ENCODE measurements at regions of chr4 and their contacts with region 1.

Region 1: GRCh38 chr4:2468445-2469192 is at the start of gene RNF4:
- DNase-seq: peak; percentile 92 to 98 (median 96)

Region 2: DNA sequence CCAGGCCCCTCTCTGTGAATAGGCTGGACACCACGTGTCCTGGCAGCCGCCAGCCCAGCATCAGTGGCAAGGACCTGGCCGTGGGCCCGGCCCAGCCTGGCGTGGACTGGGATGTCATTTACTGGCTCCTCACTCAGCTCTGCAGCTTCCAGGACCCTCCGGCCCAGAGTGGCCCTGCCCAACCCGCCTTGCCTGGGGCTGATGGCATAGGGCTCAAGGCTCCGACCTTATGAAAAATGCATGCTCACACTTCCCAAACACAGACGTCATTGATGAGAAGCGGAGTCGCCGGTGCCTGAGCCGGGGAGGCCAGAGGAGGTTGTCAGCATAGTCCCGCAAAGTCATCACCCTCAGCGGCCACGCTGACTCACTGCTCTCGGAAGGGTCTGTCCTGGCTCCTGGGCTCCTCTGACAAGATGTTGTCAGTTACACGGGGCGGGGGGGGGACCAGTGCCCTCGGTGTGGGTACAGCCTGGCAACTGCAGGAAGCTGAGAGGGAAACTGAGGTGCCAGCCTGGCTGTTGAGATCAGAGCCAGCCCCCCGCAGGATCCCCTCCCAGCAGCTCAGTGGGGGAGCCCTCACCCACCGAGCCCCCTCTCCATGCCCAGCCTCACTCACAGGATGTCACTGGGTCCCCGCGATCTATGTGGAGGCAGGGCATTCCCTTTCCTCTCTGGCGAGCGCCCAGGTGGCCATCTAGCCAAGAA is 35.5 kb before region 1 on chr4:
- intact Hi-C with region 1: loop called (anchors 5 kb)
- DNase-seq: peak; percentile 53 to 94 (median 84)

Region 3: DNA sequence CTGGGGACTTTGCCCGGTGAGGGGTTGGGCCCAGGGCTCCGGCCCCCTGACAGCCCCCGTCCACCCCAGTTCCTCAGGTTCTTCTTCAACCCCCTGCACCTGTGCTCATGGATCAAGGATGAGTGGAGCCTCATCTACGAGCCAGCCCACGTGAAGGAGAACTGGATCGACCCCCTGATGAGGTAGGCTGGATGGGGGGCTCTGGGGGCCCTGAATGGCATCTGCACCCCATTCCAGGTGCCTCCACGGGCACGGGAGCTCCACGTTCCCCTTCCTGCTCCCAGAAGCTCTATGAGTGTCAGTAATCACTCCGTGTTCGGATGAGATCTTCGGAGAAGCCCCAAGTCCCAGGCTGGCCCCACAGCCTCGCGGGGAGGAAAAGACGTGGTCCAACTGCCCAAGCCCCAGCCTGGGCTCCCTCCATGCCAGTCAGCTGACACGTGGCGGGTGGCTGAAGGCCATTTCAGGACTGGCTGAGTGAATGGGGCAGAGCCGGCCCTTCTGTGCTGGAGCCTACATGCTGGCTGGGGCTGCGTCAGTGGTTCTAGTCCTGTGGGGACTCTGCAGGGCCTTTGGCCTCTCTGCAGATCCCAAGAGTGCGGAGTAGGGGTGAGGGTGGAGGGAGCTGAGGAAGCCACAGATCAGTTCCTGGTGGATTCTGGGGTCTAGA is 25.4 kb before region 1 on chr4:
- intact Hi-C with region 1: no loop called
- DNase-seq: peak in 1 of 42 donors; percentile 20

Region 4: DNA sequence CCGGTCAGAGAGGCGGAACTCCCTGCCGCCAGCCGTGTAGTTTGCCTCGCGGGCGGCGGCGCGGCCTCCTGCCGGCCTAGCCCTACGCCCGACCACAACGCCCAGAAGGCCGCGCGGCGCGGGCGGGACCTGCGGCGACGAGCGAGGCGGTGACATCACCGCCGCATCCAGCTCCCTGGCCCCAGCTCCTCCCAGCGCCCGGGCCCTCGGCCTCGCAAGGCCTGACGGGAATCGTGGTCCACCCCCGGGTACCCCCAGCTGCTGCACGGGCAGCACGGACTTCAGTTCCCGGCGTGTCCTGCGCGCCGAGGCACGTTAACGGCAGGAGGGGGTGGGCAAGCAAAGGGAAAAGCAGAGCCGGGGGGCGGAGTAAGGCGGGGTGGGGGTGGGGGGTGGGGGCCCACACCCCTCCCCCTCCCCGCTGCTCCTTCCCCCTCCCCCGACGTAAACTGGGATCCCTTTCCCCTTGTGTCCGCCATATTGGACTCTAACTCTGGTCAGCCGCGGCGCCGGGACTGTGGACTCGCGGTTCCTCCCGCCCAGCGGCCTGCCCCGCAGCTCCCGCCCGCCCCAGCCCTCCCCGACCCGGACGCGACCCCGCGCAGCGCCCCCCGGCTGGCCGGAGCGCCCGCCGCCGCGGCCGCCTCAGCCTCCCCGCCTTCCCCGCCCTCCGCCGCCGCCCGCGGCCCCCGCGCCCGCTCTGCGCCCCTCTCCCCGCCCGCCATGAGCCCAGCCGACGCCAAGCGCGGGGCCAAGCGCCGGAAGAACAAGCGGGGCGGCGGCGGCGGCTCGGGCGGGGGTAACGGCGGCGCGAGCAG is 67.8 kb after region 1 on chr4 and contains the start of gene FAM193A:
- intact Hi-C with region 1: loop called (anchors 10 kb)
- DNase-seq: peak; percentile 98 to 100 (median 100)